Cardiac septum (tissue), 1 donor: ENCODE measurements at regions of chr7 and their contacts with region 1.

Region 1: DNA sequence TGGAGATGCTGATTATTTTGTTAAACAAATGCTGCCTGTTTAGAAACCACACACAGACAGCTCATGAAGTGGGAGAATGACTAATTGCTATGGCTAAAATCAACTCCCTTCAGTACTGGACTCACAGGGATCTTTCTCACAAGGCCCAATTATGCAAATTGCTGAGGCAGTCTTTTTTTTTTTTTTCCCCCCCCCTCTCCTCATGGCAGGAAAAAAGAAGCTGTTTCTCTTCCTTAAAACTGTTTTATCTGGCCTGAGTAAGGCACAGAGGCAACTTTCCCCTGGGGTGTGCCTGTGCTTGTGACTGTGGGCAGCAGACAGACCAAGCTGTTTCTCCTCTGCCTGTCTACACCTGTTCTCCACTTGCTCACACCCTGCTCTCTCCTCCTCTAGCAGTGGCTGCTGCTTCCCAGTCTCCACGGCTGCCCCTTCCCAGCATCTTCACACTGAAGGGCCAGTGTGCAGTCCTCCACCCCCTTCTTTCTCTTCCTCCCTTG is 65.4 kb upstream of the STEAP1B start:
- DNase-seq: no peak

Region 2: DNA sequence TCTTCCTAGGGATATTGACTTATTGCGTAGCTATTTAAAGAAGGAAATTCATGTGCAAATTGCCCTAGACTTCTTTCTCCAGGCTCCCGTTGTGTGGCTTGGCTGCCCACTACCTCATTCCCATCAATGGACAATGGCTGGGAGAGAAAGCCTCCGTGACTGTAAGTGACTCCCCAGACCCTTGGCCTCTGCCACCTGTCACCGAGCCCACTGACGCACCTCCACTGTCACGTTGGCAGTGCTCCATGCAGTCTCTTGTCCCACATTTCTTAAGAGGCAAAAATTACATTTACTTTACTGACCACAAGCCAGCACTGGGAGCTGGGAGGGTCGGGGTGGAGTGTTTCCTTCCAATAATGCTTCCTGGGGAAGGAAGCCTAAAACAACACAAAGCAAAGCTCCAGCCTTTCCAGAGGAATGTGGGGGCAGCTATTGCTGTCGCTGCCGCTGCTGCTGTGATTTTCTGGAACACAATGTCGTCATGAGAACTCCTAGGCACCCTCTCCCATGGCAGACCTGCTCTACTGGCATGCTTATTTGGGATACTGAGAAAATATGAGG is 24.4 kb after region 1 on chr7:
- intact Hi-C with region 1: loop called (anchors 1 kb)
- DNase-seq: peak; percentile 87

Region 3: GRCh38 chr7:23013715-23014649 is 448.6 kb after region 1 on chr7 and contains the start of gene HYCC1:
- intact Hi-C with region 1: loop called (anchors 2 kb)
- DNase-seq: peak; percentile 100
- total RNA-seq, gene HYCC1: 38.9 TPM